ENCODE measurements at regions of chrX and their contacts with region 1.

Region 1: GRCh38 chrX:20515841-20516461 is 249.2 kb upstream of the RPS6KA3 start:
- DNase-seq: peak; percentile 53
- ATAC-seq: peak; percentile 96
- H3K4me3 ChIP-seq: no peak overlapping the region
- H3K27ac ChIP-seq: no peak overlapping the region
- H3K4me1 ChIP-seq: peaks cover 14% of the 10 kb centered on the region; the same call in 1 of the 2 replicates
- H3K27me3 ChIP-seq: no peaks in the 10 kb centered on the region; a peak in 2 of 4 replicates
- CTCF ChIP-seq: no peak
- EP300 ChIP-seq: peak in 1 of 2 experiments; percentile 91; a peak in 1 of 4 replicates
- POLR2A ChIP-seq: no peak
- RAD21 ChIP-seq: no peak

Region 2: DNA sequence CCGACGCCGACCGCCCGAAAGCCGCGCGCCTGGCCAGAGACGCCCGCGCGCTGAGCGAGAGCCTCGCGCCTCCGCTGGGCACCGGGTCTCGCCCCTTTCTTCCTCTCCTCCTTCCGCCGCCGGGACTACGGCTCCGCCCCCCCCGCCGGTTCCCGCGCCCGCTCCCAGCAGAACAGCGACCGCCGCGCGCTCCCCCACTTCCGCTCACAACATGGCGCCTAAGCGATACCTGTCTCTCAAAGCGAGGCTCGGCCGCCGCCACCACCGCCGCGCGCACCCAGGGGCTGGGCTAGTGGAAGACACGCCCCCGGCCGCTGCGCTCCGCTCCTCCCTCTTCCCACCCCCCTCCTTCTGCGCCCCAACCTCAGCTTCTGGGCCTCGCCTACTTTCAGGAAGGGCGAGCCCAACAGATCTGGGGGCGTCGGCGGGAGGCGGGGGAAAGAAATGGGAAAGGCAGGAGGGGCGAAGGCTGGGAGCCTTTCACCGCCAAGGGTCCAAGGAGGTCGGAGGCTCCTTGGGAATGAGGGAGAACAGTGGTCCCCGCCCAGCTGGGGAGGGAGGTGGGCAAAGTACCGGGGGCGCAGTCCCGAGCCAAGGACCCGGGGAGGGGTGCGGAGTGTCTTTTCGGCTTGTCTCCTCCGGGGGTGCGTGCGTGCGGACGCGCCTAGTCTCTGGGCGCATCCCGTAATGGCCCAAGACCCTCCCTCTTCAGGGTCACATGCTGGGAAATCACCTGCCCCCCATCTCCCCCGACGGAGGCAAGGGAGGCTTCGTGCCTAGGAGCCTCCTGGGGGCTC is 248.9 kb before region 1 on chrX and contains the start of gene RPS6KA3:
- CTCF ChIA-PET with region 1: no interaction called
- POLR2A ChIA-PET with region 1: no interaction called
- RAD21 ChIA-PET with region 1: no interaction called
- SMC1A ChIA-PET with region 1: no interaction called
- in situ Hi-C with region 1: no loop called
- intact Hi-C with region 1: loop called (anchors 5 kb)
- DNase-seq: peak; percentile 44
- ATAC-seq: peak; percentile 87
- H3K4me3 ChIP-seq: peak within 1 kb of the TSS; percentile 70
- H3K27ac ChIP-seq: peak within 1 kb of the TSS; percentile 28
- H3K4me1 ChIP-seq: no peaks in the 10 kb centered on the region
- H3K27me3 ChIP-seq: peaks cover 2 to 6% of the 10 kb centered on the region in 2 experiments; a peak in 1 of 4 replicates
- CTCF ChIP-seq: no peak
- EP300 ChIP-seq: no peak
- POLR2A ChIP-seq: peak; percentile 77
- RAD21 ChIP-seq: no peak
- polyA plus RNA-seq, gene RPS6KA3: 5.2 to 9.1 TPM

Region 3: GRCh38 chrX:20352935-20353336 is 163.0 kb before region 1 on chrX:
- CTCF ChIA-PET with region 1: no interaction called
- POLR2A ChIA-PET with region 1: no interaction called
- RAD21 ChIA-PET with region 1: no interaction called
- SMC1A ChIA-PET with region 1: no interaction called
- in situ Hi-C with region 1: no loop called
- intact Hi-C with region 1: no loop called
- DNase-seq: peak; percentile 20
- ATAC-seq: peak; percentile 88
- H3K4me3 ChIP-seq: no peak overlapping the region
- H3K27ac ChIP-seq: no peak overlapping the region
- H3K4me1 ChIP-seq: no peaks in the 10 kb centered on the region
- H3K27me3 ChIP-seq: no peaks in the 10 kb centered on the region
- CTCF ChIP-seq: no peak
- EP300 ChIP-seq: no peak; a peak in 1 of 4 replicates
- POLR2A ChIP-seq: no peak
- RAD21 ChIP-seq: no peak

Region 4: DNA sequence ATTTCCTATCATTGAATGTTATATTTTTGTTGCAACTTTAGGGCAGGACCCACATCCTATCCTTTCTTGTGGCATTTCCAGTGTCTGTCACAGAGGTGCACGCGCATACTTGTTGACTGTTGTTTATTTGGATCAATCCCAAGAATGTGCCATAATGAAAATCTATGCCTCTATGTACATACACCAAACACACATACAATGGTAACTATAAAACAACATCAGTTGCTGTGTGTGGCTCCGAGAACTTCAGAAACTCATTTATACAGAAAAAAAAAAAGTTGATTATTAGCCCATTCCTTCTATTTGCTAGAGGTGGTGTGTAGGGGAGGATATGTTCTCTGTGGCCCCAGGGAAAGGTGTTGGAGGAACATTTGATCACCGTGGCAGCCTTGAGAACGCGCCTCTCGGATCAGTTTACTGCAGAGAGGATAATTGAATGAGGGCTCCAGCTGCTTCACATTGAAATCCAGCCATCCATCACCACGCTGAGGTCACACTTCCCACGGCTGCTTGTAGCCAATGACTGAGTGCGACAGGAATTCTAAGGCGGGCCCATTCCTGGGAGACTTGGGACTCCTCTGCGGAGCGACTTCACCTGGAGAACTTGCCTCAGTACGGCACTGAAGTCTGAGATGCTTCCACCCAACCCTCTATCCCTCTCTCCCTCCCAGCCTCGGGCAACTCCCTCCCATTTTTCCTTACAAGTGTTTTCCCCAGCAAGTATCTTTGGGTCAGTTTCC is 1222.4 kb after region 1 on chrX:
- CTCF ChIA-PET with region 1: no interaction called
- POLR2A ChIA-PET with region 1: no interaction called
- RAD21 ChIA-PET with region 1: no interaction called
- SMC1A ChIA-PET with region 1: no interaction called
- in situ Hi-C with region 1: loop called (anchors 5 kb)
- intact Hi-C with region 1: no loop called
- DNase-seq: no peak
- ATAC-seq: no peak
- H3K4me3 ChIP-seq: no peak overlapping the region
- H3K27ac ChIP-seq: no peak overlapping the region
- H3K4me1 ChIP-seq: no peaks in the 10 kb centered on the region
- H3K27me3 ChIP-seq: no peaks in the 10 kb centered on the region
- CTCF ChIP-seq: no peak
- EP300 ChIP-seq: no peak
- POLR2A ChIP-seq: no peak
- RAD21 ChIP-seq: no peak

Measured in GM12878 (cell line).